ENCODE measurements at regions of chr17 and their contacts with region 1.

Region 1: DNA sequence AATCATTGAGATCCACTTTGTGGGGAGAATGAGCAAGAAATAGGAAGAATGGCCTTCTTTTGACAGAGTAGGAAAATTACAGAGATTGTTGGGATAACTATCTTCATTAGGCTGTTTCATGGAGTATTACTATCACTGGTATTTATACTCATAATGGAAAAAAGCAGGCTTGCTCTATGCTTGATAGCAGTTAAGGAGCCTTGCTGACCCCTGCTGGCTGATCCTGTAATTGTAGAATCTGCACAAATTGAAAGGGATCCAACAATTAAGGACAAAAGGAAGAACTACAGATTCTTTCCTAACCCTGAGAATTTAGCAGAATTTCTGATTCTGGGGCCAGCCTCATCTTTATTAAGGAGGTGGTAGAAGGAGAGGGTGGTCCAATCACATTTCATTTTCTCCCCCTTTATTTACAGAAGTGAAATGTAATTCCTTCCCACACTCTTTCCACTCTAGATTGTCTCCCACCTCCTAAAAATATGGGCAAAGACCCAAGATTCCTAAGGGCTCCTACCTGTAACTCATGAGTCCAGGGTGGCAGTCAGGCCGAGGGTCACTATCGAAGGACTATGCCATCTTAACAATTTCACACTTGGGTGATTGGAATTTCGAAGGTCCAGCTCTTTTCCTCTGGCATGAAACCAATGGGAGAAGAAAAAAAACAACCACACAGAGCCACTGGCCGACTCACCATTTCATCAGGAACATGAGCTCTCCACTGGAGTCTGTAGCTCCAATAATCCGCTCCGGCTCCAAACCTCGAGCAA is 26.3 kb downstream of the NFE2L1 start:
- DNase-seq: peak in 2 of 3 donors; percentile 57 to 79
- ATAC-seq: peak; percentile 84 to 90 (median 88)
- H3K4me3 ChIP-seq: no peak overlapping the region
- H3K27ac ChIP-seq: no peak overlapping the region
- H3K4me1 ChIP-seq: peaks cover 0 to 11% (median 4%) of the 10 kb centered on the region in 4 donors
- H3K27me3 ChIP-seq: no peaks in the 10 kb centered on the region
- CTCF ChIP-seq: peak; percentile 74 to 96 (median 85)
- POLR2A ChIP-seq: no peak

Region 2: GRCh38 chr17:48024937-48025906 is 49.3 kb before region 1 on chr17:
- intact Hi-C with region 1: loop called (anchors 5 kb)
- DNase-seq: peak; percentile 98 to 99 (median 98)
- ATAC-seq: peak; percentile 90 to 95 (median 93)
- H3K4me3 ChIP-seq: peak overlapping the region; percentile 31 to 48 (median 37)
- H3K27ac ChIP-seq: peak overlapping the region in 1 of 3 donors; percentile 29
- H3K4me1 ChIP-seq: peaks cover 0 to 33% (median 15%) of the 10 kb centered on the region in 4 donors
- H3K27me3 ChIP-seq: no peaks in the 10 kb centered on the region
- CTCF ChIP-seq: peak; percentile 70 to 91 (median 73)
- POLR2A ChIP-seq: no peak